HEK293 (cell line): ENCODE measurements at regions of chr1 and their contacts with region 1.

Region 1: GRCh38 chr1:156212833-156213643 is at the start of gene PMF1:
- H3K4me3 ChIP-seq: peak within 1 kb of the TSS; percentile 99
- H3K27ac ChIP-seq: peak within 1 kb of the TSS; percentile 91
- H3K4me1 ChIP-seq: no peaks in the 10 kb centered on the region
- CTCF ChIP-seq: no peak

Region 2: GRCh38 chr1:156146020-156146768 is 66.8 kb before region 1 on chr1:
- CTCF ChIA-PET with region 1: interaction called, 6 read pairs
- POLR2A ChIA-PET with region 1: interaction called, 11 read pairs
- H3K4me3 ChIP-seq: no peak overlapping the region; the same call in 1 of the 2 replicates
- H3K27ac ChIP-seq: no peak overlapping the region
- H3K4me1 ChIP-seq: no peaks in the 10 kb centered on the region
- CTCF ChIP-seq: peak; percentile 58

Region 3: GRCh38 chr1:156193488-156194299 is 19.3 kb before region 1 on chr1 and contains the start of gene SLC25A44:
- CTCF ChIA-PET with region 1: interaction called, 4 read pairs
- POLR2A ChIA-PET with region 1: interaction called, 49 read pairs
- H3K4me3 ChIP-seq: peak within 1 kb of the TSS; percentile 80
- H3K27ac ChIP-seq: peak within 1 kb of the TSS; percentile 65; the same call in 1 of the 2 replicates
- H3K4me1 ChIP-seq: peaks cover 3% of the 10 kb centered on the region; the same call in 1 of the 2 replicates
- CTCF ChIP-seq: peak; percentile 80

Region 4: GRCh38 chr1:156233426-156234127 is 20.5 kb after region 1 on chr1:
- CTCF ChIA-PET with region 1: interaction called, 3 read pairs
- POLR2A ChIA-PET with region 1: interaction called, 13 read pairs
- H3K4me3 ChIP-seq: no peak overlapping the region
- H3K27ac ChIP-seq: no peak overlapping the region
- H3K4me1 ChIP-seq: no peaks in the 10 kb centered on the region
- CTCF ChIP-seq: no peak